ENCODE measurements at regions of chr4 and their contacts with region 1.

Region 1: DNA sequence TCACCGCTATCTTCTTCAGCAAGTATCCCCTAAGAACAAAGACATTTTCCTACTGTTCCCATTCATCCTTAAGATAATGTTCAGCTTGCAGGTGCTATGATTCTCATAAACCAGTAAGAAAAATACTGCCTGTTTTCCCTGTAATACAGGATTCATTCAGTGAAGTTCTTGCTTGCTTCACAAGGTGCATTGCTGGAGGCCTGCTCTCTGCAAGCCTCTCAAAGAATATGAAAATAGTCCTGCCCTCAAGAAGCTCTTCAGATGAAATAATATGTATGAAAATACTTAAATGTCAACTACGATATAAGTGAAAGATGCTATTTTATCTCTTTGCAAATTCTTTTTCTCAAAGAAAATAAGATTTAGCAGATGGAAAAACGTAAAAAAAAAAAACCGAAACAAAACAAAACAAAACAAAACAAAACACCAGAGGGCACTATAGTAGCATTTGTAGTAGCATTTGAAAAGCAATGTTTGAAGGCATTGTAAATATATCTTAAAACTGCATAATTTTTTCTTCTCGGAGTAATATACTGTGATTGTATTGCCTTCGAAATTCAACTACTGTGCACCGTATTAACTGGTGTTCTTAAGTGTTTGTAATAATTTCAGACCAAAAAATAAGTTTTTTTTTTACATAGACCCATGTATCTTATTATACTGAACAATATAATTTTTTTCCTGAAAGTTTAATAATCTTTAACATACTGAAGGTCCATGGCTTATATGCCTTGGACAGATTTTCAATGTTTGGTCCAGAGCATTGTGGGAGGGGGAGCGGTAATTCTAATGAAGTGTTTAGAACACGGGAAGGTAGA is 26.0 kb downstream of the ADH4 start:
- DNase-seq: peak in 1 of 2 donors; percentile 13
- H3K4me3 ChIP-seq: no peak overlapping the region
- H3K27ac ChIP-seq: no peak overlapping the region
- H3K4me1 ChIP-seq: peaks cover 0 to 3% (median 2%) of the 10 kb centered on the region in 4 donors
- H3K27me3 ChIP-seq: no peaks in the 10 kb centered on the region
- CTCF ChIP-seq: peak in 3 of 7 experiments; percentile 15 to 26 (median 21)
- EP300 ChIP-seq: no peak
- POLR2A ChIP-seq: no peak

Region 2: GRCh38 chr4:98995183-98996055 is 122.7 kb before region 1 on chr4 and contains the start of gene METAP1:
- intact Hi-C with region 1: no loop called
- DNase-seq: peak; percentile 94 to 98
- H3K4me3 ChIP-seq: peak within 1 kb of the TSS; percentile 89 to 99 (median 98)
- H3K27ac ChIP-seq: peak within 1 kb of the TSS; percentile 87 to 96 (median 89)
- H3K4me1 ChIP-seq: peaks cover 0 to 34% (median 19%) of the 10 kb centered on the region in 4 donors
- H3K27me3 ChIP-seq: no peaks in the 10 kb centered on the region
- CTCF ChIP-seq: peak in 5 of 7 experiments; percentile 24 to 54 (median 44)
- EP300 ChIP-seq: no peak
- POLR2A ChIP-seq: peak in 1 of 4 donors; percentile 33
- total RNA-seq, gene METAP1: 1.8 to 64.3 (median 33.2) TPM

Region 3: GRCh38 chr4:99200138-99200537 is 82.1 kb after region 1 on chr4:
- intact Hi-C with region 1: no loop called
- DNase-seq: no peak
- H3K4me3 ChIP-seq: no peak overlapping the region
- H3K27ac ChIP-seq: no peak overlapping the region
- H3K4me1 ChIP-seq: peaks cover 0 to 21% (median 3%) of the 10 kb centered on the region in 4 donors
- H3K27me3 ChIP-seq: no peaks in the 10 kb centered on the region
- CTCF ChIP-seq: no peak
- EP300 ChIP-seq: no peak
- POLR2A ChIP-seq: no peak

Region 4: GRCh38 chr4:99405433-99406115 is 287.5 kb after region 1 on chr4:
- intact Hi-C with region 1: loop called (anchors 10 kb)
- DNase-seq: peak; percentile 74 to 92
- H3K4me3 ChIP-seq: no peak overlapping the region
- H3K27ac ChIP-seq: peak overlapping the region in 4 of 5 donors; percentile 55 to 89 (median 69)
- H3K4me1 ChIP-seq: peaks cover 16 to 51% (median 34%) of the 10 kb centered on the region in 4 donors
- H3K27me3 ChIP-seq: no peaks in the 10 kb centered on the region
- CTCF ChIP-seq: peak in 6 of 7 experiments; percentile 80 to 98 (median 92)
- EP300 ChIP-seq: no peak
- POLR2A ChIP-seq: no peak

Region 5: GRCh38 chr4:99462875-99463464 is 344.9 kb after region 1 on chr4:
- intact Hi-C with region 1: loop called (anchors 10 kb)
- DNase-seq: peak; percentile 65 to 89
- H3K4me3 ChIP-seq: no peak overlapping the region
- H3K27ac ChIP-seq: peak overlapping the region in 1 of 5 donors; percentile 46
- H3K4me1 ChIP-seq: peaks cover 0 to 7% (median under 1%) of the 10 kb centered on the region in 4 donors
- H3K27me3 ChIP-seq: no peaks in the 10 kb centered on the region
- CTCF ChIP-seq: peak in 5 of 7 experiments; percentile 51 to 85 (median 68)
- EP300 ChIP-seq: no peak
- POLR2A ChIP-seq: no peak